ENCODE measurements at regions of chr7 and their contacts with region 1.

Region 1: GRCh38 chr7:27106181-27106900 is 3.9 kb upstream of the HOXA2 start:
- DNase-seq: no peak
- ATAC-seq: no peak
- H3K4me3 ChIP-seq: no peak overlapping the region
- H3K27ac ChIP-seq: no peak overlapping the region
- H3K4me1 ChIP-seq: peaks cover 20% of the 10 kb centered on the region
- CTCF ChIP-seq: no peak
- EP300 ChIP-seq: no peak
- POLR2A ChIP-seq: no peak
- RAD21 ChIP-seq: no peak

Region 2: GRCh38 chr7:27095897-27096767 is 10.2 kb before region 1 on chr7 and contains the start of gene HOXA1:
- CTCF ChIA-PET with region 1: interaction called, 20 read pairs
- POLR2A ChIA-PET with region 1: interaction called, 10 read pairs
- DNase-seq: peak; percentile 91 to 99
- ATAC-seq: peak; percentile 89 to 91
- H3K4me3 ChIP-seq: peak within 1 kb of the TSS; percentile 91
- H3K27ac ChIP-seq: peak within 1 kb of the TSS; percentile 91 to 93
- H3K4me1 ChIP-seq: peaks cover 19% of the 10 kb centered on the region
- CTCF ChIP-seq: no peak
- EP300 ChIP-seq: no peak
- POLR2A ChIP-seq: peak; percentile 61
- RAD21 ChIP-seq: peak in 1 of 2 experiments; percentile 39; a peak in 3 of 5 replicates
- polyA plus RNA-seq, gene HOXA1: 4.8 and 5.0 TPM in 2 replicates

Measured in A549 (cell line).